WTC11 (cell line): ENCODE measurements at regions of chr1 and their contacts with region 1.

Region 1: DNA sequence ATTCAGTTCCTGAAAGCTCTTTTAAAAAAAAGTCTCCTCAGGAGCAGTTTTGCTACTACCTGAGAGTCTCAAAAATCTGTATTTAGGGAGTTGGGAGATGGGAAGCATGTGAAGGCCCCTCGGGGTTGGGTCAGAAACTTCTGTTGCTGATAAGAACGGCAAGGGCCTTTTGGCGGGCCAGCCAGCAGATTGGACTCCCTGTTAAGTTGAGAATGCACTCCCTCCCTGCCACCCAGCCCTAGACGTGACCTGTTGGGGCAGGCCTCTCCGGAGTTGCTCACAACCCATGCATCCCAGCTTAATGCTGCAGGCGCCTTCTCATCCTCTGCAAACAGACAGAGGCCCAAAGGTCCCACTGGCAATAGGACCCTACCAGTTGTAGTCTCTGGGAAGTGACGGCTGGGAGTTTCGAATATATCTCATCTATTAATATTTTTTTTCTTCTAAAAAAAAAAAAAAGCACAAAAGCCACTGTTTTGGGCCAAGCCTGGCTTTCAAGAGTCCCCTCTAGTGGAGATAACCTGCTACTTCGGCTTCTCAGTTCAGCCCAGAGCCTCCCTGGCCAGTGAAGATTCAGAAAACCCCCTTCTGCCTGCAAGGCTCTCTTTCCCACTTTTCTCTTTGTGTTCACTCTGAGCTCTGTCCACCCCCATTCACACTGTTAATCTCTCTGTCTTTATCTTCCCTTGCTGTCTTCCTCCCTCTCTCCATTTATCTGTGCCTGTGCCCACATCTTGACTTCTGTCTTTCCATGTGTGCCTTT is 5.3 kb downstream of the PLXNA2 start:
- DNase-seq: peak; percentile 51
- ATAC-seq: peak; percentile 69
- H3K4me3 Mint-ChIP-seq: no peak overlapping the region
- H3K27ac Mint-ChIP-seq: no peak overlapping the region
- H3K4me1 Mint-ChIP-seq: peaks cover 47% of the 10 kb centered on the region
- H3K27me3 Mint-ChIP-seq: peaks cover 31% of the 10 kb centered on the region
- CTCF ChIP-seq: peak; percentile 64

Region 2: GRCh38 chr1:208081972-208082371 is 156.9 kb before region 1 on chr1:
- CTCF ChIA-PET with region 1: interaction called, 10 read pairs
- POLR2A ChIA-PET with region 1: no interaction called
- DNase-seq: no peak
- ATAC-seq: peak; percentile 67
- H3K4me3 Mint-ChIP-seq: no peak overlapping the region
- H3K27ac Mint-ChIP-seq: no peak overlapping the region
- H3K4me1 Mint-ChIP-seq: peaks cover 38% of the 10 kb centered on the region
- H3K27me3 Mint-ChIP-seq: no peaks in the 10 kb centered on the region; the same call in 1 of the 2 replicates
- CTCF ChIP-seq: no peak

Region 3: GRCh38 chr1:208101661-208102431 is 137.0 kb before region 1 on chr1:
- CTCF ChIA-PET with region 1: interaction called, 19 read pairs
- POLR2A ChIA-PET with region 1: no interaction called
- DNase-seq: peak; percentile 26
- ATAC-seq: peak; percentile 79
- H3K4me3 Mint-ChIP-seq: no peak overlapping the region
- H3K27ac Mint-ChIP-seq: no peak overlapping the region
- H3K4me1 Mint-ChIP-seq: peaks cover 34% of the 10 kb centered on the region
- H3K27me3 Mint-ChIP-seq: no peaks in the 10 kb centered on the region; the same call in 1 of the 2 replicates
- CTCF ChIP-seq: no peak

Region 4: GRCh38 chr1:208165659-208166058 is 73.2 kb before region 1 on chr1:
- CTCF ChIA-PET with region 1: interaction called, 15 read pairs
- POLR2A ChIA-PET with region 1: no interaction called
- DNase-seq: no peak
- ATAC-seq: no peak
- H3K4me3 Mint-ChIP-seq: no peak overlapping the region
- H3K27ac Mint-ChIP-seq: no peak overlapping the region
- H3K4me1 Mint-ChIP-seq: peaks cover 55% of the 10 kb centered on the region
- H3K27me3 Mint-ChIP-seq: no peaks in the 10 kb centered on the region; the same call in 1 of the 2 replicates
- CTCF ChIP-seq: no peak

Region 5: DNA sequence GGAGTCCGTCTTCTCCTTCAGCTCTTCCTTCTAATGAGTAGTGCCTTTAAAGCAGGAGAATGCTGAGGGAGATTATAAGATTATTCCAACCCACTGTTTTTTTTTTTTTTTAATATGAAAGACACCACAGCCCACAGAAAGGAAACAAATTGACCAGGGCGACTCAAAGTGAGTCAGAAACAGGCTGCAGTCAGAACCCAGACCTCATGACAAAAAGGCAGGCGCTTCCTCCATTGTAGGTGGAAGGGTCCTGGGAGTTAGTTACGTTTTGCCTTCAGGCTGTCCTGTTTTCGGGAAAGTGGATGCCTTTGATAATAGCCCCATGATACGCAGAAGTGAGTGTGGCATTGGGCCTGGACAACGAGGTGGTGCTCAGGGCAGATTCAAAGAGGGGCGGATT is 15.8 kb before region 1 on chr1:
- CTCF ChIA-PET with region 1: interaction called, 13 read pairs
- POLR2A ChIA-PET with region 1: interaction called, 4 read pairs
- DNase-seq: no peak
- ATAC-seq: no peak
- H3K4me3 Mint-ChIP-seq: no peak overlapping the region
- H3K27ac Mint-ChIP-seq: no peak overlapping the region
- H3K4me1 Mint-ChIP-seq: peaks cover 28% of the 10 kb centered on the region
- H3K27me3 Mint-ChIP-seq: no peaks in the 10 kb centered on the region; the same call in 1 of the 2 replicates
- CTCF ChIP-seq: no peak

Region 6: DNA sequence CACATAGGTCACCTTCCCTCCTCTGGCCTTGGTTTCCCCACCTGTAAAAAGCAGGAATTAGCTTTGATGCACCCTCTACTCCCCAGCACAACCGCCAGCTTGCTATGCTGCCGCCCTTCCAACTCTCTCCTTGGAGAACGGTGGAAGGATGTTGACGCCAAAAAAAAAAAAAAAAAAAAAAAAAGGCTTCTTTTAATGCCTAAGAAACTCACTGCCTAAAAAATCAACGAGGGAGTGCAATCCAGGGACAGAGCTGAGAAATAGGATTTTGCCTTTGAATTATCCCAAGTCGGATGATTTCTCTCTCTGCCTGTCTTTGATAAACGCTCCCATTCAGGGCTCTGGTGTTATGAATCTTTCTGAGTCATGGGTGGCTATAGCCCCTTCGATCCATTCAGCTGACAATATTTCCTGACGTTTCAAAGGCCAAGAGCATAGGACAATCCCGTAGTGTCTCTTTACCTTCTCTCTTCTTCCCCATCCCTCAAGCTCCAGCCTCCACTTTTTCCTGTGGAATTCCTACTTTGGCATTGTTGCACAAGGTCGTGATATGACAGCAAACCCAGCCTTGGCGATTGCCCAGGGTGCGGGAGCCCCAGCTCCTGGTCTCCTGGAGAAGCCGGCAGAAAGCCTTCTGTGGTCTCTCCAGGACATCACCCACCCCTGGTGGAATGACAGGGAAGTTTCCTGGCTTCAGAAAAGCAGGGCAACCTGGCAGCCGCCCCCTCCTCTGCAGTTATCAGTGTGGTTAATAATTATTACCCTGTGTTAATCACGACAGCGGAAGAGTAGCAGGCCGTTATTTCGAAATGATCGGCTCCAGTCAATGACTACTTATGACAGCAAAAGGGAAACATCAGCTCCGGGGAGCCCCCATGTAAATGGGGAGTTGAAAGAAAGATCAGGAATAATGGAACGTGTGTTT is 13.3 kb after region 1 on chr1:
- CTCF ChIA-PET with region 1: interaction called, 16 read pairs
- POLR2A ChIA-PET with region 1: no interaction called
- DNase-seq: peak; percentile 31
- ATAC-seq: peak; percentile 84
- H3K4me3 Mint-ChIP-seq: no peak overlapping the region
- H3K27ac Mint-ChIP-seq: no peak overlapping the region
- H3K4me1 Mint-ChIP-seq: peaks cover 20% of the 10 kb centered on the region
- H3K27me3 Mint-ChIP-seq: peaks cover 33% of the 10 kb centered on the region
- CTCF ChIP-seq: no peak

Region 7: GRCh38 chr1:208445758-208446203 is 206.9 kb after region 1 on chr1:
- CTCF ChIA-PET with region 1: no interaction called
- POLR2A ChIA-PET with region 1: no interaction called
- DNase-seq: no peak
- ATAC-seq: peak; percentile 48
- H3K4me3 Mint-ChIP-seq: no peak overlapping the region
- H3K27ac Mint-ChIP-seq: no peak overlapping the region
- H3K4me1 Mint-ChIP-seq: peaks cover 27% of the 10 kb centered on the region
- H3K27me3 Mint-ChIP-seq: no peaks in the 10 kb centered on the region
- CTCF ChIP-seq: no peak